Breast epithelium (tissue), 4 donors: ENCODE measurements at regions of chr15 and their contacts with region 1.

Region 1: GRCh38 chr15:34014556-34014955 is 24.4 kb downstream of the AVEN start:
- DNase-seq: no peak
- H3K4me3 ChIP-seq: no peak overlapping the region
- H3K27ac ChIP-seq: no peak overlapping the region
- H3K4me1 ChIP-seq: no peaks in the 10 kb centered on the region
- H3K27me3 ChIP-seq: no peaks in the 10 kb centered on the region
- CTCF ChIP-seq: no peak
- POLR2A ChIP-seq: no peak

Region 2: GRCh38 chr15:34055853-34056595 is 41.5 kb after region 1 on chr15:
- intact Hi-C with region 1: no loop called
- DNase-seq: no peak
- H3K4me3 ChIP-seq: no peak overlapping the region
- H3K27ac ChIP-seq: peak overlapping the region; percentile 8 to 66
- H3K4me1 ChIP-seq: no peaks in the 10 kb centered on the region
- H3K27me3 ChIP-seq: no peaks in the 10 kb centered on the region
- CTCF ChIP-seq: no peak
- POLR2A ChIP-seq: no peak

Region 3: GRCh38 chr15:34188711-34189110 is 174.2 kb after region 1 on chr15:
- intact Hi-C with region 1: loop called (anchors 5 kb)
- DNase-seq: no peak
- H3K4me3 ChIP-seq: no peak overlapping the region
- H3K27ac ChIP-seq: no peak overlapping the region
- H3K4me1 ChIP-seq: no peaks in the 10 kb centered on the region
- H3K27me3 ChIP-seq: no peaks in the 10 kb centered on the region
- CTCF ChIP-seq: no peak
- POLR2A ChIP-seq: no peak